K562 (cell line): ENCODE measurements at regions of chr15 and their contacts with region 1.

Region 1: GRCh38 chr15:72616491-72617210 is 37.8 kb upstream of the GOLGA6B start:
- DNase-seq: no peak
- ATAC-seq: no peak
- H3K4me3 ChIP-seq: no peak overlapping the region
- H3K27ac ChIP-seq: no peak overlapping the region
- H3K4me1 ChIP-seq: no peaks in the 10 kb centered on the region; a peak in 1 of 5 replicates
- H3K27me3 ChIP-seq: peaks cover 0 to 18% of the 10 kb centered on the region in 2 experiments; a peak in 3 of 5 replicates
- CTCF ChIP-seq: no peak
- EP300 ChIP-seq: no peak
- POLR2A ChIP-seq: no peak
- RAD21 ChIP-seq: no peak

Region 2: GRCh38 chr15:72437650-72438316 is 178.9 kb before region 1 on chr15:
- CTCF ChIA-PET with region 1: no interaction called
- POLR2A ChIA-PET with region 1: no interaction called
- in situ Hi-C with region 1: no loop called
- intact Hi-C with region 1: no loop called
- DNase-seq: no peak
- ATAC-seq: no peak
- H3K4me3 ChIP-seq: no peak overlapping the region
- H3K27ac ChIP-seq: no peak overlapping the region
- H3K4me1 ChIP-seq: no peaks in the 10 kb centered on the region
- H3K27me3 ChIP-seq: no peaks in the 10 kb centered on the region
- CTCF ChIP-seq: no peak
- EP300 ChIP-seq: no peak
- POLR2A ChIP-seq: no peak
- RAD21 ChIP-seq: no peak

Region 3: DNA sequence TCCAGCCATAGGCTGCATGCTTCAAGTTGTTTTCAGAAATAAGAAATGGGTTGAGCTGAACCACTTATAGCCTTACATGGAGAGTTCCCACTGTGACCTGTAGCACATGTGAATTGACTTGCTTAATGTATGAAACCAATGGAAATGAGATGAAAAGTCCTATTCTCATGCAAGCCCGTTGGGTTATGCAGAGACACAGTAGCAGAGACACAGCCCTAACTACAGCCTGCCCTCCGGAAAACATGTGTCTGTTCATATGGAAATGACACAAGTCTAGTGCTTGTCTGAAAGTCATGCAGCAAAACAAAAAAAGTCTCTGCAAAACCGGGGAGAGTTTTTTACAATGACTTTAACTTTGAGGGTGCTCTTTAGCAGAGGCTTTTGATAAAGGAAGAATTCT is 54.9 kb after region 1 on chr15:
- CTCF ChIA-PET with region 1: no interaction called
- POLR2A ChIA-PET with region 1: no interaction called
- in situ Hi-C with region 1: loop called (anchors 5 kb)
- intact Hi-C with region 1: no loop called
- DNase-seq: no peak
- ATAC-seq: no peak; the same call in 2 of the 3 replicates
- H3K4me3 ChIP-seq: no peak overlapping the region
- H3K27ac ChIP-seq: no peak overlapping the region
- H3K4me1 ChIP-seq: peaks cover 0 to 3% of the 10 kb centered on the region in 2 experiments; a peak in 2 of 5 replicates
- H3K27me3 ChIP-seq: peaks cover 14 to 16% of the 10 kb centered on the region in 2 experiments; a peak in 3 of 5 replicates
- CTCF ChIP-seq: no peak
- EP300 ChIP-seq: no peak
- POLR2A ChIP-seq: no peak
- RAD21 ChIP-seq: no peak